Activated naive CD4-positive, alpha-beta T cell treated with anti-CD3 and anti-CD28 coated beads for 36 hours (primary cell): ENCODE measurements at regions of chr6 and their contacts with region 1.

Region 1: DNA sequence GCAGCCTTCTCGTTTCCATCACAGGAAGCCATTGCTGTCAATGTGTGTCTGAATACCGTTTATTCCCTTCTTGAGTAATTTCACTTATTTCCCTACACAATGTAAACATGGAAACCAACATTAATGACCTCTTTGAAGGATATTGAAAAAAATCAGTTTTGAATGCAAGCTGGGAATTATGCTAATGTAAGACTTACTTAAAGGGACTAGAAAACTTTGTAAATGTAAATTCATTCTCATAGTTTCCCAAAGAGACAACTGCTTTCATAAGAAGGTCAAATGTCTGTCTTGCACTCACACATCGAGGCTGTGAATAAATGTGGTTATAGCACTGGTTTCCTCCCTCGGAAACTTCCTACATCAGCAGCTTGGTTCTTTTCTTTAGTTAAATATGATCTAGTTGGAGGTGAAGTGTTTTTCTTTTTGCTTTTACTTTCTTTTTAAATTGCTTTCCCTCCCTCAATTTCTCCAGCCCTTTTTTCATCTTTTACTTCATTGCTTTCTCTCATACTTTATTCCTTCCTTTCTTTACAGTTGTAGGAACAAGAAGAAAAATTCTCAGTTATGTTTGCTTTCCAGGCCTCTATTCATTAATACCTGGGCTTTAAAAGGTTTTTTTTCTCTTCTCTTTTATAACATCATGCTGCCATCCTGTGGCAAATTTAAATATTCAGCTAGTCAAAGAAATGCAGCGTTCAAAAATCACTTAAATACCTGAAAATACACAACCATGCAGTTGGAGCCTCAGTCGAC is 108.3 kb downstream of the TNFAIP3 start:
- DNase-seq: peak; percentile 64
- H3K4me3 Mint-ChIP-seq: peak overlapping the region; percentile 73
- H3K27ac Mint-ChIP-seq: peak overlapping the region; percentile 91
- H3K4me1 Mint-ChIP-seq: peaks cover 72% of the 10 kb centered on the region
- H3K27me3 Mint-ChIP-seq: no peaks in the 10 kb centered on the region

Region 2: DNA sequence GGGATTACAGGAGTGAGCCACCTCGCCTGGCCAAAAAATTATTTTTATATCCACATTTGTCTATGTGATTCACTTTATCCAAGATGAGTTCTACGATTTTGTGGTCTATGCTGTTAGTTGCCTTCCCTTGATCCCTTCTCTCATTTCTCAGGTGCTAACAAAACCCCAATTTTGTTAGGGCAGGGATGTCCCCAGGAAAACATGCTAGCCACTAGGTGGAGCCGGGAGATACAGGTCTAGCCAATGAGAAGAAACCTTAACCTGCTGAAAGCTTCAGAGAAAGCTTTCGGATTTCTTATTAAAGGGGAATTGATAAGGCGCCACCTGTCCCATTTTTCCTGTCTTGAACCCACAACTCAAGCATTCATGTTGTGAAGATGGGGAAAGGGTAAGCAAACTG is 313.8 kb before region 1 on chr6:
- CTCF ChIA-PET with region 1: interaction called, 4 read pairs
- intact Hi-C with region 1: loop called (anchors 1 kb)
- DNase-seq: peak; percentile 71
- H3K4me3 Mint-ChIP-seq: no peak overlapping the region
- H3K27ac Mint-ChIP-seq: no peak overlapping the region
- H3K4me1 Mint-ChIP-seq: peaks cover 19% of the 10 kb centered on the region
- H3K27me3 Mint-ChIP-seq: peaks cover 4% of the 10 kb centered on the region

Region 3: GRCh38 chr6:137799950-137800568 is 175.3 kb before region 1 on chr6:
- CTCF ChIA-PET with region 1: interaction called, 13 read pairs
- intact Hi-C with region 1: loop called (anchors 1 kb)
- DNase-seq: peak; percentile 86
- H3K4me3 Mint-ChIP-seq: no peak overlapping the region
- H3K27ac Mint-ChIP-seq: peak overlapping the region; percentile 73
- H3K4me1 Mint-ChIP-seq: peaks cover 60% of the 10 kb centered on the region
- H3K27me3 Mint-ChIP-seq: no peaks in the 10 kb centered on the region

Region 4: DNA sequence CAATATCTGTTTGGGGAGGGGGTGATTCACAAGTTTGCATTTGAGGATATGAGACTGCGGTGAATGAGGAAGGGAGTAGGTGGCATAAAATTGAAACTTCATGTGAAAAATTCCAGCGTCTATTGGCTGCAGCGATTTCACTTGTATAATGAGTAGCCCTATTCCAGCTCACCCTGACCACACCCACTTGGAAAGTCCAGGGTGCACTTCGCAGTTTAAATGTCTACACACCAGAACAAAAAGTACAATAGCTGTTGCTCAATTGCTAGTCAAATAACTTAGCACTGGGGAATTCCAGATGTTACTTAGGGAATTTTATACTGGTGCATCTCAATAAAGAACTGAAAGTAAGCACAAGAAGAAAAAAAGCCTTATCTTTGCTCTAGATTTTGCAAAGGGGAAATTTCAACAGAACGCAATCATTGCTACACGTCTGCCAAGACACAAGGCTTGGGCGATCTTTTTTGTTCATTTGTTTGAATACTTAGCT is 102.0 kb before region 1 on chr6:
- CTCF ChIA-PET with region 1: interaction called, 71 read pairs
- intact Hi-C with region 1: loop called (anchors 1 kb)
- DNase-seq: peak; percentile 97
- H3K4me3 Mint-ChIP-seq: peak overlapping the region; percentile 89
- H3K27ac Mint-ChIP-seq: peak overlapping the region; percentile 99
- H3K4me1 Mint-ChIP-seq: peaks cover 37% of the 10 kb centered on the region
- H3K27me3 Mint-ChIP-seq: no peaks in the 10 kb centered on the region

Region 5: GRCh38 chr6:137927777-137928218 is 47.6 kb before region 1 on chr6:
- CTCF ChIA-PET with region 1: no interaction called
- intact Hi-C with region 1: loop called (anchors 1 kb)
- DNase-seq: peak; percentile 90
- H3K4me3 Mint-ChIP-seq: peak overlapping the region; percentile 66
- H3K27ac Mint-ChIP-seq: peak overlapping the region; percentile 95
- H3K4me1 Mint-ChIP-seq: peaks cover 63% of the 10 kb centered on the region
- H3K27me3 Mint-ChIP-seq: no peaks in the 10 kb centered on the region

Region 6: DNA sequence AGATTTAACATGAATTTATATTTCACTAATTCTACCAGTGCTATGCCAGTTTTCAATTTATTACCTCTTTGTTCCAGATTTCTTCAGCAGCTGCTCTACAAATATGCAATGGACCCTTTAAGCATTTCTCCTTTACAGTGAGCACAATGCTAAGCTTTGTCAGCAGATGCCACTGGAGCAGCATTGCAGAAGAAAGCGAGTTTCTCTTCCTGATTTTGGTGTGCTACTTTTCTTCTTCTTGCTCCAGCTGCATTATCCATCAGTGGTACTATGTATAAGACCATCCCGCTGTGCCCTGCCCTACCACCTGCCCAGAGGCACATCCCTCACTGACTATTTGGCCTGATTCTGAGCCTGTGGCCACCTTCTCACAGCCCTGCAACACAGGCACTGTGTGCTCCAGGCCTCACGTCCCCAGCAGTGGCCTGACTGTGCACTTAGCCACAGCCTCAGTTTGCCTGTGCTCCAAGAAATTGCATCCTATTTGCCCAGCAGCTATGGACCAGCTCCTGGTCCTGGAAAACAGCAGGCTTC is 24.2 kb before region 1 on chr6:
- CTCF ChIA-PET with region 1: interaction called, 12 read pairs
- intact Hi-C with region 1: loop called (anchors 1 kb)
- DNase-seq: no peak
- H3K4me3 Mint-ChIP-seq: no peak overlapping the region
- H3K27ac Mint-ChIP-seq: no peak overlapping the region
- H3K4me1 Mint-ChIP-seq: peaks cover 31% of the 10 kb centered on the region
- H3K27me3 Mint-ChIP-seq: no peaks in the 10 kb centered on the region

Region 7: DNA sequence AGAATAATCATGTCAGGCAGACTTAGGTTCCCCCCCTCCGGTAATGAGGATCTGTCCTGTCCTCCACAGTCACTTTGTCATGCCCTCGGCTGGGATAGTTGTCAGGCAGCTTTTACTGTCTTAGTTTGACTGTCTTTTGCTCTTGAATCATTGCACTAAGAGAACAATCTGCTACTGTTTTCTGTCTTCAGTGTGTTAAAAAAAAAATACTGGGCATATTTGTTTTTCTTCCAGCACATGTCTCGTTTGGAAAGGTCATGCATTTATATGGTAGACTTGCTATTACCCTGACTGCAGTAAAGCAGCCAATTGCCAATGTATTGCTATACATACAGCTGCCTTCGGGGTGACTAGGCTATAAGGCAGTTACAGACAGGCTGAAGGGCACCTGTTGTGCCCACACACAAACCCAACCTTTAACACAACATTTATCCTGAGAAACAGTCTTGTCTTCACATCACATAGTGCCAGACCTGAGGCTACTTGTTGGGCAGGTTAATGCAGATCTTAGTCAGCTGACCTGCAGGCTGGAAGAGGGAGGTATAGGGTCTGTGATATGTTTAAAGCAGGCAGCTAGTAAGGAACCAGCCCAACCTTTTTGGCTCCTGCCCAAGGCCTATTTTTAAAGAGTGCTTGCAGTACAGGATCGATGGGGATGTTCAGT is 213.0 kb after region 1 on chr6:
- CTCF ChIA-PET with region 1: no interaction called
- intact Hi-C with region 1: no loop called
- DNase-seq: no peak
- H3K4me3 Mint-ChIP-seq: no peak overlapping the region
- H3K27ac Mint-ChIP-seq: no peak overlapping the region
- H3K4me1 Mint-ChIP-seq: no peaks in the 10 kb centered on the region
- H3K27me3 Mint-ChIP-seq: peaks cover 11% of the 10 kb centered on the region

Region 8: DNA sequence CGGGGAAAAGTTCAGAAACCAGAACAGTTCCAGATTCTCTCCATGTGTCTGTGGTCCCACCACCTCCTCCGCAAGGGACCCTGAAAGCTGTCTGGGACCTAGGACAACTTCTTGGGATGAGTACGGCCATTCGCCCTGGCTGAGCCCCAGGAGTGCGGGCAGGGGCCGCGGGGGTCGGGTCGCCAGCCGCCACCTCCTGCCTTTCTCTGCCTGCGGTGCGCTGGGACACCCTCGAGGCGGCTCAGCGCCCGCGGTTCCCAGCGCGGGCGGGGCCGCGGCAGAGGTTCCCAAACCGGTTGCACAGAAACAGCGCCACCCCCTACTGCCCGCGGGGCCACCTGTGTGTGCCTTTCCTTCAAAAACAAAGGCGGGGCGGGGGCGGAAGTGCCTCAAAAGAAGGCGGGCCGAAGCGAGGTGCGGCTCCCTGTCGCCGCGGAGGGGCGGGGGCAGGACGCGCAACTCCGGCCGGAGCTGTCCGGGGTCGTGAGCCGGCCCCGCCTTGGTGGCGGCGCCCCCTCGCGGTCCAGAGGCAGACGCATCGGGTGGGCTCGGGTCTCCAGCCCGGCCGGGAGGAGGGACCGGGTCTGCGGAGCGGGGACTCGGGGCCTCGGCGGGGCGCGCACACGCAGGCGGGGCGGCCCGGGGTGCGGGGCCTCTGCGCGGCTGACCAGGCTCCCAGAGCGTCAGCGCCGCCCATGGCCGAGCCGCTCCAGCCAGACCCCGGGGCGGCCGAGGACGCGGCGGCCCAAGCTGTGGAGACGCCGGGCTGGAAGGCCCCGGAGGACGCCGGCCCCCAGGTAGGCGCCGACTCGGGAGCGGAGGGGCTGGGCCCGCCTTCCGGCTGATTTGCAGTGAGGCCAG is 428.7 kb after region 1 on chr6 and contains the start of gene HEBP2:
- CTCF ChIA-PET with region 1: no interaction called
- intact Hi-C with region 1: loop called (anchors 10 kb)
- DNase-seq: peak; percentile 98
- H3K4me3 Mint-ChIP-seq: peak within 1 kb of the TSS; percentile 81
- H3K27ac Mint-ChIP-seq: peak within 1 kb of the TSS; percentile 77
- H3K4me1 Mint-ChIP-seq: peaks cover 15% of the 10 kb centered on the region
- H3K27me3 Mint-ChIP-seq: no peaks in the 10 kb centered on the region
- total RNA-seq, gene HEBP2: 48.5 to 50.8 TPM